Sigmoid colon (tissue), 7 donors: ENCODE measurements at regions of chr1 and their contacts with region 1.

Region 1: DNA sequence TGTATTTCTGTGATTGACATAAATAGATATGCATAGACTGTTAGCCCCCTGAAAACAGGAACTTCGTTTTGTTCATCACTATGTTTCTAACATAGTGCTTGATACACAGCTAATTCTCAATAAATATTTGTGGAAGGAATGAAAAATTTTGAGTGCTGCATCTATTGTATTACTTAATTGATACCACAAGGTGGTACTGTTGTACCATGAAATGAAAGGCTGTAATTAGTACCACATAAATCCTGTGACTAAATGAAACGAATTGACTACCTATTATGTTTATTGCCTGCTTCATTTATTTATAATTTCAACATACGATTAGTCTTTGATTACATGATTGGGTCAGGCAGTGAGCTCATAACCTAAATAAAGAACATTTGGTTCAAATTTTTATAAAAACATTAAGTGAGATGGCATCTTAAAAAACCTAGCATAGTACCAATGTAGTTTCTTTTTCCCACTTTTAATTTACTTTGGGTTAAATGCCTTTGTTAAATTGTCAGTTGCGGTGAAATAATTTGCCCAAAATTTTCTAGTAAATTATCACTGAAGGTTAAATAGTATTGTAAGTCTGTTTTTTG is 15.0 kb upstream of the TGFB2 start:
- DNase-seq: no peak
- H3K4me3 ChIP-seq: no peak overlapping the region
- H3K27ac ChIP-seq: no peak overlapping the region
- H3K4me1 ChIP-seq: no peaks in the 10 kb centered on the region
- H3K27me3 ChIP-seq: no peaks in the 10 kb centered on the region
- CTCF ChIP-seq: peak; percentile 46 to 60 (median 47)
- EP300 ChIP-seq: no peak
- POLR2A ChIP-seq: no peak

Region 2: GRCh38 chr1:218521375-218522169 is 191.4 kb after region 1 on chr1:
- intact Hi-C with region 1: loop called (anchors 2 kb)
- DNase-seq: peak; percentile 76
- H3K4me3 ChIP-seq: no peak overlapping the region
- H3K27ac ChIP-seq: no peak overlapping the region
- H3K4me1 ChIP-seq: peaks cover 0 to 8% (median 0%) of the 10 kb centered on the region in 4 donors
- H3K27me3 ChIP-seq: no peaks in the 10 kb centered on the region
- CTCF ChIP-seq: peak; percentile 54 to 65 (median 63)
- EP300 ChIP-seq: no peak
- POLR2A ChIP-seq: no peak

Region 3: DNA sequence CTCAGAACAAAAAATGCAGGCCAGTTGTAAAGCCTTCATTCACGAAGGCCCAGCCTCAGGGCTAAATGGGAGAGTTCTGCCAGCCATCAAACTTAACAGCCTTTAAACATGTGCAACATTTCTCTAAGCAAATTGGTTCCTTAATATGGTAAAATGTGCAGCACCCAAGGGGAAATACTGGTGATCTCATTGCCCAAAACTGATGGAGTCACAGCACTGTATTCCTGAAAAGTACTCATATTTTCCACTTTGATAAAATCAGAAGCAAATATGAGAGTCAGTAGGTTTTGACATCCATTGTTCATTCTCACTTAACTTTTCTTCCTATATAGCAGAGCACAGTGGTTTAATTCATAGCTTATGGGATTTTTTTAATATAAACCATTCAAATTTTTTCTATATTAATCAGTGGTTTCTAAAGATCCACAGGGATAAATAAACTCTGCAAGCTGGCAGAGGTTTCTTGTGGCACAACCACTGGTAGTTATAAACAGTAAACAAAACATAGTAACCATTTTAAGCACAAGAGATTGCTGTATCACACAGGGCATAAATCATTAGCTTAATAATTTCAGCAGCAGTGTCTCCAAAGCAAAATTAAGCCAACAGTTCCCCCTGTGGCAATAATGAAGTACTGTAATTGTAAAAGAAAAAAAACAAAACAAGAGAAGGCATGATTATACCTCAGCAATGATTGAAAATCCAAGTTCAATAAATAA is 736.7 kb after region 1 on chr1:
- intact Hi-C with region 1: loop called (anchors 10 kb)
- DNase-seq: no peak
- H3K4me3 ChIP-seq: no peak overlapping the region
- H3K27ac ChIP-seq: peak overlapping the region in 2 of 4 donors; percentile 30 to 52
- H3K4me1 ChIP-seq: peaks cover 0 to 17% (median 7%) of the 10 kb centered on the region in 4 donors
- H3K27me3 ChIP-seq: no peaks in the 10 kb centered on the region
- CTCF ChIP-seq: peak in 2 of 4 experiments; percentile 38 to 40
- EP300 ChIP-seq: no peak
- POLR2A ChIP-seq: no peak

Region 4: DNA sequence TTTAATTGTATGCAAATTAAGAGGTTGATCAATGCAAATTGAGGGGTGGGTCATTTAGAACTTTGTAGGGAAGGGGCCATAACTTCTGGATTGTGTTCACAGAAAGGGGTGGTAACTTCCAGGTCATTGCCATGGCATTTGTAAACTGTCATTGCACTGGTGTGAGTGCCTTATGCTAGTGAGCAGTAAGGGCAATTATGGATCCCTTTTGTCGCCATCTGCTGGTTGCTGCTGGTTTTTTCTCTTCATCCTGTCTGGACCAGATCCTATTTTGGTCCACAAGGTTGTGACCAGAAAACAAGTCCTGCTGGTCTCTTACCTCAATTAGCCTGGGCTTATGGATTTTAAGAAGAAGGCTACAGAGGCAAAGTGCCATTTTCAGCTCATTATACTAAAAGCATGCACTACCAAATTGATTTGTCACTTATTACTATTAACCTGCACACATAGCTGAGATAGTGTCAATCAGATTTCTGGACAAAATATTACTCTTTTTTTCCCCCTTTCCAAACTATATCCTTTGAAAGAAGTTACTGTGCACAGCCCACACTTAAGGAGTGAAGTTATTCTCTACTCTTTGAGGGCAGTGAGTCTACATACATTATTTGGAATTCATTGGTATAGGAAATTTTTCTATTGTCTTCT is 1086.6 kb after region 1 on chr1:
- intact Hi-C with region 1: loop called (anchors 5 kb)
- DNase-seq: peak; percentile 64
- H3K4me3 ChIP-seq: no peak overlapping the region
- H3K27ac ChIP-seq: no peak overlapping the region
- H3K4me1 ChIP-seq: peaks cover 0 to 10% (median 0%) of the 10 kb centered on the region in 4 donors
- H3K27me3 ChIP-seq: no peaks in the 10 kb centered on the region
- CTCF ChIP-seq: peak in 3 of 4 experiments; percentile 22 to 59 (median 28)
- EP300 ChIP-seq: no peak
- POLR2A ChIP-seq: no peak

Region 5: GRCh38 chr1:219660666-219661463 is 1330.7 kb after region 1 on chr1:
- intact Hi-C with region 1: loop called (anchors 2 kb)
- DNase-seq: peak; percentile 94
- H3K4me3 ChIP-seq: peak overlapping the region in 3 of 4 donors; percentile 2 to 33 (median 27)
- H3K27ac ChIP-seq: peak overlapping the region; percentile 16 to 39 (median 25)
- H3K4me1 ChIP-seq: peaks cover 0 to 12% (median 3%) of the 10 kb centered on the region in 4 donors
- H3K27me3 ChIP-seq: no peaks in the 10 kb centered on the region
- CTCF ChIP-seq: peak in 3 of 4 experiments; percentile 49 to 70 (median 50)
- EP300 ChIP-seq: no peak
- POLR2A ChIP-seq: no peak

Region 6: DNA sequence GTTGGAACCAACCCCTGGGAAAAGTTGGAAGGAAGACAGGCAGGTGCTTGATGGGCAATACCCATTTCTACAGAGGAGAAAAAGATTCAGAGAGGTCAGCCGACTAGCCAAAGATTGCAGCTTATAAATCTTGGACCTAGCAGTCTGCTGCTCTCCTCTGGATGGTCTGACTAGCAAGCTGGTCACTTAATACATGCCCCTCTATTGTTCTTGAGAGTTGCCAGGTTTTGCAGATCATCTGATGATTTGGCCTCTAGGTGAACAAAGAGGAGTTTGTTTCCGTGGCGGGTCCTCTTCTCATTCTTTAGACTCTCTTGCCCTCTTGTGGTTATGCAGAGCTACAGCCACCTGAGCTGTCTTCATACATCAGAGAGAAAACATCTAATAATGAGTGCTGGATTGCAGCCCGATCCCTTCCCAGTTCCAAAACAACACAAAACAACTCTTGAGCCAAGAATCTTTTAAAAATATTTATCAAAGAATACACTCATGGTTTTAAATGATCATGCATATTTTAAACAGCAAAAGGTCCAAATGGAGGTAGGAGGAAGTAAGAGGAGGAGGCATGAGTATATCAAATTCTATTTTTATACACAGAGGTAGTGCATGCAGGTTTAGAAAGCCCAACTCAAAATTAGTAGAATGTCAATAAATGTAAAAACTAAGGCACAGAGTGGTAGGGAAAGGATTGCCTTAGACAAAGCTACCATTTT is 1482.5 kb after region 1 on chr1:
- intact Hi-C with region 1: loop called (anchors 5 kb)
- DNase-seq: no peak
- H3K4me3 ChIP-seq: no peak overlapping the region
- H3K27ac ChIP-seq: no peak overlapping the region
- H3K4me1 ChIP-seq: peaks cover 0 to 9% (median 0%) of the 10 kb centered on the region in 4 donors
- H3K27me3 ChIP-seq: peaks cover 0 to 3% (median 0%) of the 10 kb centered on the region in 3 donors
- CTCF ChIP-seq: peak; percentile 18 to 59 (median 46)
- EP300 ChIP-seq: no peak
- POLR2A ChIP-seq: no peak